AG04449 (cell line): ENCODE measurements at regions of chr12 and their contacts with region 1.

Region 1: GRCh38 chr12:57261428-57261865 is 10.5 kb upstream of the STAC3 start:
- DNase-seq: no peak
- H3K4me3 ChIP-seq: no peak overlapping the region
- CTCF ChIP-seq: no peak

Region 2: GRCh38 chr12:57238854-57239554 is 22.4 kb before region 1 on chr12:
- CTCF ChIA-PET with region 1: interaction called, 135 read pairs
- POLR2A ChIA-PET with region 1: no interaction called
- DNase-seq: no peak
- H3K4me3 ChIP-seq: peak overlapping the region; percentile 69
- CTCF ChIP-seq: peak; percentile 100

Region 3: DNA sequence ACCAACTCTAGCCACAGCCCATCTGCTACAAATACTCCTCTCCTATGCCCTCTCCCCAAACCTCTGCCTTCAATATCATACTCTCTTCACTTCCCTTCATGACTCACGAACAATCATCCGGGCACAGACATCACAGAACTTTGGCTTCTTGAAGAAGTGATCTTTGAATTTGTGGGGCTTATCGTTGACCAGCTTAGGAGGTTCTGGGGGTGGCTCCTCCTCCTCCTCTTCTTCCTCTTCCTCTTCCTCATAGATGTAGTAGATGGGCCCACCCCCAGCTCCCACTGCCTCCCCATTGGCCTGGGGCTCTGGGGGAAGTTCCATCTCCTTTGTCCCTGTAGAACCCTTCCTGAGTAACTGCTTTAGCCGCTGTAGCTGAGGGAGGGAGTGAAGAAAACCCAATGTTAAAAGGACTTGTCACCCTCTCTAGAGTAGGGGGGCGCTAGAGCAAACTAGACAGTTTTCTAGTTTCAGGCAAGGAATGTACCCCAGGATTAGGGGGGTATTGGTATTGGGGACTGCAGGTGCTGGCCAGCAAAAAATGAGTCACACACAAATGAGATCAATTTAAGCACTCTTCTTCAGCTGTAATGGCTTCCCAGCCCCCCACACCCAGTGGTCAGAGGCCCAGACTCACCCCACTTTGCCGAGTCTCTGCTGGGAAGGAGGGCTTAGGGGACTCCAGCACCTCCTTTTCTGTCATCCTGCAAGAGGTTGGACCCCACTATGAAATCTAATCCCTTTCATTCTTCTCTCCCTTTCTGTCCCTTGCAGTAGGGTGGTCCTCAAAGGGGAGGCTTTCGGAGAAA is 12.3 kb before region 1 on chr12:
- CTCF ChIA-PET with region 1: interaction called, 135 read pairs
- POLR2A ChIA-PET with region 1: no interaction called
- DNase-seq: no peak
- H3K4me3 ChIP-seq: no peak overlapping the region
- CTCF ChIP-seq: no peak

Region 4: DNA sequence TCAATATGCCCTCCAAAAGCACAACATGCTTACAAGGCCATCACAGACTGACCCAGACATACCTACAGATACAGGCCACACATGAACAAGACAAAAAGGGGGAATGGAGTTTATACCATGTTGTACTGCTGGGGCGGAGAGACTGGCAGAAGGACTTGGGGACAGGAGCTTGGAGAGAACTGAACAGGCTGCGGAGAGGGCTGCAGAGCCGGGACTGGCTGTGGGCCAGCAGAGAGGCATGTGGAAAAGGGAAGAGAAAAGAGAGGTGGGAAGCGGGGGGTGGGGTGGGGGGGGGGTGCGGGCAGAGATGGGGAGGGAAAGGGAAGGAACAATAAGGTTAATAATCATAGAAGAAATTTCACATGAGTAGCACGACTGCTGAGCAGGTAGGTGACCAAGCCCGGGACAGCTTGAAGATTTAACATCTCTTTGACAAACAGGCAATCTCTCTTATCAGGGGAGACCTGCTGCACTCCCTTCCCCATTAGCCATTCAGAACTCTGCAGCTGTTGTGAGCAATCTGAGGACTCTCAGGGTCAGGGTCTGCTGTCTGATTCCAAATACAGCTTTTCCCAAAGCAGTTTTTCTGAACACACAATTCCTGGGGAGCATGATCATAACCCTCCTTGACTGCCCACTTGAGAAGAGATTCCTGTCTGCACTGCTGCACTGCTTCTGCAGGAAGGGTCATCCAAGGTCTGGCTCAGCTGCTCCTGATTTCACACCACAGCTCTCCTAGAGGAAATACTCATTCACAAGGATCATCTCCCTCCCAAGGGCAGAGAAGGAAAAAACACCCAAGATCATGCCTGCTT is 11.1 kb after region 1 on chr12:
- CTCF ChIA-PET with region 1: interaction called, 35 read pairs
- POLR2A ChIA-PET with region 1: interaction called, 3 read pairs
- DNase-seq: no peak
- H3K4me3 ChIP-seq: no peak overlapping the region
- CTCF ChIP-seq: no peak

Region 5: DNA sequence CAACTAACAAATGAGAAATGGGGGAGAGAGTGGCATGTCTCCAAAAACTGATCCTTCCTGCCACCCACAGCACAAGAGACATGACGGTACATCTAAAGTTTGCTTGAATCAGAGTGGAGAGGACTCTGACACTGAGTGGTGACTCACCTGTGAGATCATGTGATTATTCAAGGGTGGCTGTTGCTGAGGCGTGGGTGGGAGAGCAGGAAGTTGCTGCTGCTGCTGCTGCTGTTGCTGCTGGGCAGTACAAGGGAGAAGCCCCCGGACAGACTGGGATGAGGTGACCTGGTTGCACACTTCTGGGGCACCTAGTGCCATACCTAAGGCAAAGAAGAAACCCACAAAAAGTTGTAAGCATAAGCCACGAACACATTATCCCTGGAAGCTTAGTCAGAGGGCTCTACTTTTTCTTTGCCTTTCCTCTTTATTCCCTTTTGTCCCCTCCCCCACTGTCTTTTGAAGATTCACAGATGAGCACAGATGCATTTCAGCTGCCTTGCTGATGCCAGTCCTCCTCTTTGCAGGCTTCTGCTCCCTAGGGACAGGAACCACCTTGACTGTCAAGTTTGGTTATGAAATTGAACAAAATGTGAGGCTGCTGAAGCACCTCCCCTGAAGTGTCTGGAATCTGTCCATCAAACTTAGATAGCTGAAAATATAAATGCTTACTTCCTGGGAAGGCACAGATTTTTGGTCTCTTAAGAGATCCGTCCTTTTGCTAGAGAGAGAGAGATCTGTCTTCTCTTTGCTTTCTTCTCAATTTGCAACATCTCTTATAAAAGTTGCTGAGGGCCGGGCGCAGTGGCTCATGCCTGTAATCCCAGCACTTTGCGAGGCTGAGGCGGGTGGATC is 19.0 kb after region 1 on chr12:
- CTCF ChIA-PET with region 1: interaction called, 31 read pairs
- POLR2A ChIA-PET with region 1: no interaction called
- DNase-seq: peak; percentile 79
- H3K4me3 ChIP-seq: no peak overlapping the region
- CTCF ChIP-seq: no peak